ENCODE measurements at regions of chr14 and their contacts with region 1.

Region 1: DNA sequence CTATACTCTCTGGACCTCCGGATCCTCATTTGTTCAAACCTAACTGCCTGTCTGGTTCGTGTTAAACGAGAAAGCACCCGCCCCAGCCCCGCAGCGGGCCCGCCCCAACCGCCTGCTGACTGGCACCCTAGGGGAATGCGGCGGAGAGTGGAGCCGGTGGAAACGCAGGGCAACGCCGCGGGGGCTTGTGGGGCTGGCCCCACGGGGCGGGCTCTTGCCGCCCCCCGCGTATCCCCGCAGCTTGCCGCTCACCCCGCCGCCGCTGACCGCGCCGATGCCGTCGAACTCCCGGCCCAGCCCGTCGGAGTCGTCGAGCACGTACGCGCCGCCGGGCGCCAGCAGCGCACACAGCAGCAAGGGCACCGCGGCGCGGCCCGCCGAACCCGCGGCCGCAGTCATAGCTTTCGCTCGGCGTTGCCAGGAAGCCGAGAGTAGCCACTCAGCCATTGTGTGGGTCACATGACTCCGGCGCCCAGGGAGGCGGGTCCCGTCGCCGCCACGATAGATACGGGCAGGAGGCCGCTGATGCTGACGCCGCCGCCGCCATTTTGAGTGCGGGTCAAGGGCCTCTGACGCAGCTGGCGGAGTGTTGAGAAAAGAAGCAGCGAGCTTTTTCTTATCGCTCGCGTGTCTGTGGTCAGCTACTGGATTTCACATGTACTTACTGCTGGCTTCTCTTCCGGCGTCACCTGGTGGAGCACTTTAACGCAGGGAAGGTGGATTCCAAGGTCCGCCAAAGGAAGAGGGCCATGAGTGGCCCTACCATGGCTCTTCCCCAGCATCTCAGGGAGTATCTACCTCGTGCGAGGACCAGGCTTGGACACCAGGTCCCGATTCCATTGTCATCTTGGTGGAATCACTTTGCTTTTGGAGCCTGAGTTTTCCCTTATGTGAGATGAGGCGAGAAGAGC is at the start of gene GALC:
- DNase-seq: peak; percentile 86
- H3K4me3 ChIP-seq: peak within 1 kb of the TSS; percentile 73
- H3K27ac ChIP-seq: peak within 1 kb of the TSS; percentile 35
- H3K4me1 ChIP-seq: peaks cover 19% of the 10 kb centered on the region
- CTCF ChIP-seq: no peak
- total RNA-seq, gene GALC: 4.4 and 7.5 TPM in 2 replicates

Region 2: GRCh38 chr14:88005978-88006851 is 13.2 kb after region 1 on chr14:
- CTCF ChIA-PET with region 1: interaction called, 3 read pairs
- POLR2A ChIA-PET with region 1: interaction called, 66 read pairs
- intact Hi-C with region 1: loop called (anchors 1 kb)
- DNase-seq: peak; percentile 84
- H3K4me3 ChIP-seq: peak overlapping the region; percentile 71
- H3K27ac ChIP-seq: peak overlapping the region; percentile 78
- H3K4me1 ChIP-seq: peaks cover 42% of the 10 kb centered on the region
- CTCF ChIP-seq: no peak